ENCODE measurements at regions of chr10 and their contacts with region 1.

Region 1: DNA sequence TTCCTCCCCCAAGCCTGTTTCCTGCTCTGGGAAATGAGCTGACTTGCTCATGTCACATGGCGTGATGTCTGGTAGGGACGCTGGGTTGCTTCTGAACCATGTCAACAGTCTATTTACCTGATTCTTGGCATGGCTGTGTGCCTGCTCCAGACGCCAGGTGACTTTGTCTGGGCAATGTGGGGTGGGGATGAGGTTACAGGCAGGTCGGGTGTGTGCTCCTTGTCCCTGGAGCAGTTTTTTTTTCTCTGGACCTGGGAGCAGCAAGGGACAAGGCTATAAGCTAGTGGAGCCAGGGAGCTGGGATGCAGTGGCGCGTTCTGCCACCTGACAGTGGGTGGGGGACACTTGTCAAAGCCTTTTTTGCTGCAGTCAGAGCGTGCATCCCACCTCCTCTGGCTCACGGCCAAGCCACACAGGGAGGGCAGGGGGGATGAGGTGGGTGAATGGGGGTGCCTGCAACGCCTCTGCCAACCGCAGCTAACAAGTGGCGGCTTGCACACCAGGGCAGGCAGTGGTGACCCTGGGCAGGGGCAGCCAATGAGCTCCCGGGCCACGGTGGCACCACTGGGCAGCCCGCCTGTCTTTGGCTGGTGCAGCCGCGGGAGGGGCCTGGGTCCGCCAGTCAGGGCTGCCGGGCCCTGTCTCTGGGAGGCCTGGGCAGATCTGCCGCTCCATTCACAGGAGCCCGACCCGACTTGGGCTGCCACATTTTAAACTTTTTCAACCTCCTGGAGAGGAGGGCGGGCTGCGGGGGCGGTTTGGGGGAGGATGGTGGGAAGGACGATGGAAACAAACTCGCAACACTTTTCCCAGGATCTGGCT is 22.9 kb downstream of the DNAJB12 start:
- DNase-seq: peak; percentile 97
- ATAC-seq: peak; percentile 70
- H3K4me3 Mint-ChIP-seq: peak overlapping the region; percentile 94
- H3K27ac Mint-ChIP-seq: peak overlapping the region; percentile 99
- H3K4me1 Mint-ChIP-seq: peaks cover 89% of the 10 kb centered on the region
- H3K27me3 Mint-ChIP-seq: no peaks in the 10 kb centered on the region

Region 2: GRCh38 chr10:71319042-71319799 is 1012.6 kb before region 1 on chr10 and contains the start of gene SLC29A3:
- CTCF ChIA-PET with region 1: no interaction called
- POLR2A ChIA-PET with region 1: no interaction called
- intact Hi-C with region 1: loop called in 1 of 2 experiments (anchors 5 kb)
- DNase-seq: peak; percentile 94
- ATAC-seq: peak; percentile 87
- H3K4me3 Mint-ChIP-seq: peak within 1 kb of the TSS; percentile 85
- H3K27ac Mint-ChIP-seq: peak within 1 kb of the TSS; percentile 77
- H3K4me1 Mint-ChIP-seq: peaks cover 33% of the 10 kb centered on the region
- H3K27me3 Mint-ChIP-seq: no peaks in the 10 kb centered on the region
- total RNA-seq, gene SLC29A3: 2.4 to 2.6 TPM

Region 3: DNA sequence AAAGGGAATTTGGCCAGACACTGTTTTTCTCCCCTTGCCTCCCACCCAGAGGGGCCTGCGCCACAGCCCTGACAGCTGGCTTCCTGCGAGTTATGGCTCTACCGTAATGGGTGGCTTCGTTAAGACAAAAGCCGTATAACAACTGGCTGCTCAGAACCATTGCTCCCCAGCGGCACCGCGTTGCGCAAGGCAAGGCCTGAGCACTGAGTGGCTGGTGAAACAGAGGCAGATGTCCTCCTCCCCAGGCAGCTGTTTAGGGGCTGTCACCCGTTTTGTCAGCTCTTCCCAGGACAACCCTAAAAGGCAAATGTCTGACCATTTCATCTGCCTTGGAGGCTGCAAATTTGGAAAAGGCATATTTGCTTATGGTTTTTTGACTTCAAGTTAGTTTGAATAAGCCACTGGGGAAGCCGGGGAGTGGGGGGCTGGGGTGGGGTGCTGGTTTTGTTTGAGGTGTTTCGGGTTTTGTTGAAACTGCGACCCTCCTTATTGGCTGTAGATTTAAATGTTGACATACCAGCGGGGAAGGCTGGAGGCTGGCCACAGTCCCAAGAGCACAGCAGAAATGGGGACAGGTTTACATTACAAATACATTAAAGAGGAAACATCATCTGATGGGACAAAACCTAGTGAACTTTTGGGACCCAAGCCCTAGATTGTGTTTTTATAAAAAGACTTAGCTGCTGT is 242.8 kb before region 1 on chr10:
- CTCF ChIA-PET with region 1: interaction called, 6 read pairs
- POLR2A ChIA-PET with region 1: interaction called, 3 read pairs
- intact Hi-C with region 1: loop called (anchors 2 to 5 kb)
- DNase-seq: peak; percentile 79
- ATAC-seq: peak; percentile 50
- H3K4me3 Mint-ChIP-seq: peak overlapping the region; percentile 98
- H3K27ac Mint-ChIP-seq: peak overlapping the region; percentile 100
- H3K4me1 Mint-ChIP-seq: peaks cover 57% of the 10 kb centered on the region
- H3K27me3 Mint-ChIP-seq: no peaks in the 10 kb centered on the region

Region 4: DNA sequence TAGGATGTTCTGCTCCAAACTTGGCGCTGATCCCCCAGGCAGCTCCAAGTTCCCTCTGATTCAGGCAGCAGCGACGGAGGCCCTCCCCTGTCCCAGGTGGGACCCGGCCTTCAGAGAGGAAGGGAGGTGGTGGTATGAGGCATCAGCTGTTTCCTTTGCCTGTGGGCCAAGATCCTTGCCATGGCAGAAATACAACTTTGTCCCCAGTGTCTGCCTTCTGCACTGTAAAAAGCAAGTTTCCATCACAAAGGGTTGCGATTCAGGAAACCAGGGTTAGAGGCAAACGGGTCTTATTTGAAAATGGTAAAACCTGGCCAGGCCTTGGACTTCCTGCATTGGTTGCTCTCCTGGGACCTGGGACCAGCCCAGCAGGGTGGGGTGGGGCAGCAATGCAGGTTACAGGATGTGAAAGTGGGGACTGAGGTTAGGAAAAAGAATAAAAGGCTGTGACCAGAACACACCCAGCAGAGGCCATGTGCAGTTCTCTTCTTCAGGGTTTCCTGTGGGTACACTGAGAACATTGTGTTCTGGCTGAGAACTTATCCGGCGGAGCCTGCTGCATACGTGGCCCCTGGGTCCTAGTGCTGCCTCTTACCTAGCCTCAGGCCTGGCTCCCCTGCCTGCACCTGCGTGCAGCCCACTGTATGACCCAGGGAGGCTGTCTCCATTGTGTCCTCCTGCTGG is 83.2 kb before region 1 on chr10:
- CTCF ChIA-PET with region 1: interaction called, 6 read pairs
- POLR2A ChIA-PET with region 1: interaction called, 5 read pairs
- intact Hi-C with region 1: loop called in 1 of 2 experiments (anchors 1 kb)
- DNase-seq: peak; percentile 84
- ATAC-seq: peak; percentile 91
- H3K4me3 Mint-ChIP-seq: peak overlapping the region; percentile 71
- H3K27ac Mint-ChIP-seq: peak overlapping the region; percentile 89
- H3K4me1 Mint-ChIP-seq: peaks cover 82% of the 10 kb centered on the region
- H3K27me3 Mint-ChIP-seq: no peaks in the 10 kb centered on the region

Region 5: GRCh38 chr10:72260588-72261322 is 71.1 kb before region 1 on chr10:
- CTCF ChIA-PET with region 1: interaction called, 13 read pairs
- POLR2A ChIA-PET with region 1: interaction called, 10 read pairs
- intact Hi-C with region 1: loop called in 1 of 2 experiments (anchors 1 kb)
- DNase-seq: peak; percentile 97
- ATAC-seq: peak; percentile 75
- H3K4me3 Mint-ChIP-seq: peak overlapping the region; percentile 78
- H3K27ac Mint-ChIP-seq: peak overlapping the region; percentile 97
- H3K4me1 Mint-ChIP-seq: peaks cover 70% of the 10 kb centered on the region
- H3K27me3 Mint-ChIP-seq: no peaks in the 10 kb centered on the region

Region 6: GRCh38 chr10:72292223-72292691 is 39.6 kb before region 1 on chr10:
- CTCF ChIA-PET with region 1: interaction called, 11 read pairs
- POLR2A ChIA-PET with region 1: interaction called, 75 read pairs
- intact Hi-C with region 1: loop called (anchors 1 to 2 kb)
- DNase-seq: peak; percentile 84
- ATAC-seq: peak; percentile 57
- H3K4me3 Mint-ChIP-seq: peak overlapping the region; percentile 56
- H3K27ac Mint-ChIP-seq: peak overlapping the region; percentile 99
- H3K4me1 Mint-ChIP-seq: peaks cover 63% of the 10 kb centered on the region
- H3K27me3 Mint-ChIP-seq: no peaks in the 10 kb centered on the region

Region 7: DNA sequence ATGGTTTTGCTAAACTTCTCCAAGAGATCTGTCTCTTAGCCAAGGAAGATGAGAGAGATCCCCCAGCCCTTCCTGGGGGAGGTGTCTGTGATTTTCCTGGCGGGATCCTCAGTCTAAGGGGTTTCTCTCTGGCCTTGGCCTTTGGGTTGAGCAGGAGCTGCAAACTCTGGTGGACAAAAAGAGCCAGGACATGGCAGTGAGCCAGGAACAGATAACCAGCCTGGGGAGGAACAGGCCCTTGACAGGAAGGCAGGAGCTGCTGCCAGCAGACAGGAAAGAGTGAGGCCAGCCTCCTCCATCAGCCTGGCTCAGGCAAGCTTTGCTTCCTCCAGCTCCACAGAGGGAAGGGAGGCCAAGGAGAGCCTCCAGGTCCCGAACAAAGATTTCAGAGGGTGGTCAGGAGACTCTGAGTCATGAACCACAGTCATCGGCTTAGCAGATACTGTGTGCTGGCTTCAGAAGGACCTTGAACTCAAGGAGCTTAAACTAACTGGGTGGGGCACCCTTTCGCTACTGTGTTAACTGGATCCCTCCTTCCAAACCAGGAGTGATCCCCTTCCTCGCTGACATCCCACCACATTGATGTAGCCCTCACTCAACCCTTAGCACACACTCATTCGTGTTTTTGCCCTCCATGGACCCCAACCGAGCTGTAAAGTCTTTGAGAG is 23.4 kb before region 1 on chr10:
- CTCF ChIA-PET with region 1: interaction called, 20 read pairs
- POLR2A ChIA-PET with region 1: interaction called, 69 read pairs
- intact Hi-C with region 1: no loop called
- DNase-seq: peak; percentile 68
- ATAC-seq: peak; percentile 26
- H3K4me3 Mint-ChIP-seq: peak overlapping the region; percentile 9
- H3K27ac Mint-ChIP-seq: peak overlapping the region; percentile 89
- H3K4me1 Mint-ChIP-seq: peaks cover 74% of the 10 kb centered on the region
- H3K27me3 Mint-ChIP-seq: no peaks in the 10 kb centered on the region

Region 8: GRCh38 chr10:72466018-72466417 is 134.2 kb after region 1 on chr10:
- CTCF ChIA-PET with region 1: no interaction called
- POLR2A ChIA-PET with region 1: no interaction called
- intact Hi-C with region 1: no loop called
- DNase-seq: no peak
- ATAC-seq: no peak
- H3K4me3 Mint-ChIP-seq: no peak overlapping the region
- H3K27ac Mint-ChIP-seq: no peak overlapping the region
- H3K4me1 Mint-ChIP-seq: peaks cover 2% of the 10 kb centered on the region
- H3K27me3 Mint-ChIP-seq: no peaks in the 10 kb centered on the region